Activated T-helper 2 cell treated with anti-CD3 and anti-CD28 coated beads, Interferon-gamma antibody, Interleukin-2, Interleukin-4, amounts not matched to agents 10 μg/mL and 5 μg/mL and 100 μg/mL, durations not matched to agents 14 hours and 24 hours and 36 hours (primary cell): ENCODE measurements at regions of chr15 and their contacts with region 1.

Region 1: DNA sequence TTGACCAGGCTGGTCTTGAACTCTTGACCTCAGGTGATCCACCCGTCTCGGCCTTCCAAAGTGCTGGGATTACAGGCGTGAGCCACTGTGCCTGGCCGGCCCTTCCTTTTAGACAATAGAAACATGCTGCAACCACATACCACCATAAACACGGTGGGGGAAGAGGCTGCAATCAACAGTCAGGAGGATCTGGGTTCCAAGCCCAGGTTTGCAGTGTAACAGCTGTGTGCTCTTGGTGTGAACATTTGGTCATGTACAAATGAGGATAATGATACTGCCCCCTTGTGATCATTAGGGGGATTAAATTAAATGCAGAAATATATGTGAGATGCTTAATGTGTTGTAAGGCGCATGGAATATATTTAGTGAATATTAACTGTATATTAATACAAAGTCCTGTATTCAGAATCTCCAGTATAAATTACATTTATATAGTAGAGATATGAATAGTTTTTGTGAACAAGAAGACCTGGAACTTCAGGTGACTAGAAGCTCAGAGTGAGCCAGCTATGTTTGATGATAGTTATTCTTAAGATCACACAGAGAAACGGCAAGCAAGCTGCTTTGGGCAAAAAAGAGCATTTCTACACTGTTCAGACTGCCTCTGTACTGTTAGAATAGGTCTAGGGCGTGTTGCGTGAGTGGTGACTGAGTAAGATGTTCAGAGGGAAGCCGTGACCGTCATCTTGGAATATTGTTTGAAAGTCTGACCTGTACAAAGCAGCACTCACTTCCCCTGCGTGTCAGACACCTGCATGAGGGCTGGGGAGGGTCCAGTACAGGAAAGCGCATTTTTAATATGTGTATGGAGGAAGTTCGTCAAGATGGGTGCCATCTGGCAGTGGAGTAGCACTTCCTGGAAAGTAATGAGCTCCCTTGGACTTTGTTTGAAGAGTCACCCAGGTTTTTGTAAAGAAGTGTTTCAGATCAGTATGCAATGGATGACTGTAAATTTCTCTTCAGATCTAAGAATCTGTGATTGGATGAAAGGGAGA is 125.8 kb downstream of the PGPEP1L start:
- DNase-seq: no peak
- H3K4me3 Mint-ChIP-seq: no peak overlapping the region
- H3K27ac Mint-ChIP-seq: no peak overlapping the region
- H3K4me1 Mint-ChIP-seq: no peaks in the 10 kb centered on the region
- H3K27me3 Mint-ChIP-seq: no peaks in the 10 kb centered on the region

Region 2: GRCh38 chr15:98779463-98780071 is 102.3 kb before region 1 on chr15:
- intact Hi-C with region 1: loop called (anchors 1 kb)
- DNase-seq: peak; percentile 51
- H3K4me3 Mint-ChIP-seq: no peak overlapping the region
- H3K27ac Mint-ChIP-seq: no peak overlapping the region
- H3K4me1 Mint-ChIP-seq: peaks cover 29% of the 10 kb centered on the region
- H3K27me3 Mint-ChIP-seq: peaks cover 2% of the 10 kb centered on the region

Region 3: DNA sequence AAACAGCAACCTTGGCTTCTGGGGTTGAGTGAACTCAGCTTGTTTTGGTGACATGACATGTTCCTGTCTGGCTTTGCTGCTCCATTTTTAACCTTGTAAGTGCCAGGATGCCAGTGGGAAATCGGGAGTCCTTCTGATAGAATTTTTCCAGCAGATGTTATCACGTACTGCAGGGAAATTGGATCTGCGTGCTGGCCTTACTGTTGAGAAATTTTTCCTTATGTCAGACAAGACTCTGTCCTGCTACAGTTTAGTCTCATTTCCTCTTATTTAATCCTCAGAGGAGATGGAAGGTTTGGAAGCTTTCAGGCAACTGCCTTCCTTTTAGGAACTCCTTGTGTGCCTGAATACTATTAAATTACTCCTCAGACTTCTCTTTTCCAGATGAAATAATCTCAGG is 45.2 kb after region 1 on chr15:
- intact Hi-C with region 1: no loop called
- DNase-seq: no peak
- H3K4me3 Mint-ChIP-seq: no peak overlapping the region
- H3K27ac Mint-ChIP-seq: no peak overlapping the region
- H3K4me1 Mint-ChIP-seq: no peaks in the 10 kb centered on the region
- H3K27me3 Mint-ChIP-seq: no peaks in the 10 kb centered on the region